Caco-2 (cell line): ENCODE measurements at regions of chr15 and their contacts with region 1.

Region 1: DNA sequence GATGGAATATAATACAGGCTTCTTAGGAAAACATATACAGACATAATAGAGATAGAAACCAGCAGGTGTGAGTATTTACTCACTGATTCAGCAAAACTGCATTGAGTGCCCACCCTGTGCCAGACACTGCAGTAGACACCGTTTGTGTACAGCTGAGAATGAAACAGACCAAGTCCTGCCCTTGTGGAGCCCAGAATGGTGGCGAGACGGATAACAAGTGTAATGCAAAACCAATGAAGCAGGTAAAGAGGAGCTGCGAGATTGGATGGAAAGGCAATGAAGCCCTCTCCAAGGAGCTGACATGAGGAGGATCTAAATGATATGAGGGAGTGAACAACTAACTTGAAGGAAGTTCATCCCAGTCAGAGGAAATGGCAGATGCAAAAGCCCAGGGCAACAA is 256.4 kb downstream of the MEX3B start:
- DNase-seq: no peak
- H3K4me3 ChIP-seq: no peak overlapping the region
- H3K4me3 Mint-ChIP-seq: no peak overlapping the region
- H3K27ac Mint-ChIP-seq: no peak overlapping the region
- H3K4me1 ChIP-seq: peaks cover 3% of the 10 kb centered on the region; the same call in 1 of the 2 replicates
- H3K4me1 Mint-ChIP-seq: no peaks in the 10 kb centered on the region
- H3K27me3 ChIP-seq: no peaks in the 10 kb centered on the region
- H3K27me3 Mint-ChIP-seq: peaks cover 2% of the 10 kb centered on the region
- CTCF ChIP-seq: no peak

Region 2: GRCh38 chr15:81723701-81724100 is 65.7 kb before region 1 on chr15:
- CTCF ChIA-PET with region 1: no interaction called
- POLR2A ChIA-PET with region 1: no interaction called
- intact Hi-C with region 1: loop called (anchors 10 kb)
- DNase-seq: no peak
- H3K4me3 ChIP-seq: no peak overlapping the region
- H3K4me3 Mint-ChIP-seq: no peak overlapping the region
- H3K27ac Mint-ChIP-seq: no peak overlapping the region
- H3K4me1 ChIP-seq: no peaks in the 10 kb centered on the region
- H3K4me1 Mint-ChIP-seq: no peaks in the 10 kb centered on the region
- H3K27me3 ChIP-seq: no peaks in the 10 kb centered on the region
- H3K27me3 Mint-ChIP-seq: no peaks in the 10 kb centered on the region
- CTCF ChIP-seq: no peak